Astrocyte of the cerebellum (primary cell): ENCODE measurements at regions of chr1 and their contacts with region 1.

Region 1: DNA sequence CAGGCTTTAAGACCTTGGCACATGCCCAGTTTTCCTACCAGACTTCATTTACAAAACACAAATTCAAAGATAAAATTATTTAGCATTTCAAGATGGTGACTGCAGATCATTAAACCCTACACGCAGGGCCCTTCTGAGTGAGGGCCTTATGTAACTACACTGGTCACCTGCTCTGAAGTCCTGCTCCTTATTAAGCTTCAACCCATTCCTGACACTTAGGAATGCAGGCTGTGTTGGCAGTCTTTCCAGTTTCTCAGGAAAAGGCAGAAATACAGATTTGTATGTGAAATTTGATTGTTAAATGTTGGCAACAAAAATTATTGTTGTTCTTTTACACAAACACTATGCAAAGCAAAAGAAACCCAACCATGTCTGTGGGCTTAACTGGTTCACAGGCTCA is 25.8 kb upstream of the BCAS2 start:
- DNase-seq: no peak
- H3K4me3 ChIP-seq: no peak overlapping the region
- CTCF ChIP-seq: no peak

Region 2: DNA sequence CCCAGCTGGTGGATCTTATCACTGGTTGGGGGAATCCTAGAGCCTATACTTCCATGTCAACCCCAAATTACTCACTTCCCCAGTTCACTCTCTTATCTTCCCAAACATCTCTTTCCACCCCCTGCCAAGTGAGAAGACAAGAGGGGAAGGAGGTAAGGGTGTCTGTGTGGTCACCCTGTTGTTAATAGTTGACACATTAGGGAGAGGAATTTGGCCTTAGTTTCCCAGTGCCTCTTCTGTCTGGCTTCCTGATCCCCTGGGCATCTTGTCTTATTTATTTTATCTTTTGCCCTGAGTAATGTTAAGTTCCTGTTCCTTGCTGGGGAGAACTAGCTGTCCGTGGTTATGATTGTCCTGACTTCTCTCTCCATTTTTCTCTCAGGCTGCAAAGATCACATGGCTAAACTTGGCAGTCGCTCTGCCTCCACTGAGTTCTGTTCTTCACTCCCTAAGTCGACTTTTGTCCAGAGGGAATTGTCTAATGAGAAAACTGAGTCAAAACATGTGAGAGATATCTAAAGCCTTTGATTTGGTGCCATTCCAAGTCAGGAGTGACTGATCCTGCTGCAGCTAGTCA is 296.4 kb before region 1 on chr1:
- in situ Hi-C with region 1: no loop called
- DNase-seq: peak; percentile 55
- H3K4me3 ChIP-seq: no peak overlapping the region
- CTCF ChIP-seq: no peak

Region 3: DNA sequence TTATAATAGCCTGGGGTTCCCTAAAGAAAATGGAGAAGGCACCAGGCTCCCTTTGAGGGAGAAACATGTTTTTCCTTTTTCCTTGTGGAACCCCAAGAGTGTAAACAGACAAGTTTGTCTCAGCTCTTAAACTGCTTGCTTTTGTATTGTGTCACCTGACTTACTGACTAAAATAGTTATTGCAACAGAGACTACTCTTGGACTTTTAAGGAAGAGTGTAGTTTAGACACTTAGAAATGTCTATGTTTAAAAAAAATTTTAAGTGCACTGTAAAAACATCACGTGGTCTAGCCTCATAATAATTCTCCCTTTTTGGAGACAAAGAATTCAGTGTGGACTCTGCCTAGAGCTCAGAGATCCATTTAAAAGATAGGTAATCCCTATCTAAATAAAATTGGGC is 237.3 kb before region 1 on chr1:
- in situ Hi-C with region 1: no loop called
- DNase-seq: no peak
- H3K4me3 ChIP-seq: no peak overlapping the region
- CTCF ChIP-seq: no peak

Region 4: DNA sequence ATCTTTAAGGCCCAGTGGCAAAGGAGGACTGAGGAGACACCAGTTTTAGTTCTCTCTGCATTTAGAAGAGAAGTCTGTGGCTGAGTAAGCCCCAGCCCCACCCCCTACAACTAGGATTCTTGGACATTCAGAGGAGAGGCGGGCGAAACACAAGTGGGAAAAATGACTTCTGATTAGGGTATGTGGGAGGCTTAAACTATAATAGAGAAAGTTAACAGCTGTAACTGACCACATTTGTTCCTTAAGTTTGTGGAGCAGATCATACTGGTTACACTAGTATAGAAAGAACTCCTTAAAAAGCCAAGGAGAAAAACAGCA is 85.0 kb before region 1 on chr1:
- in situ Hi-C with region 1: no loop called
- DNase-seq: no peak
- H3K4me3 ChIP-seq: no peak overlapping the region
- CTCF ChIP-seq: no peak

Region 5: GRCh38 chr1:114651893-114652292 is 44.7 kb after region 1 on chr1:
- in situ Hi-C with region 1: no loop called
- DNase-seq: no peak
- H3K4me3 ChIP-seq: no peak overlapping the region
- CTCF ChIP-seq: no peak

Region 6: GRCh38 chr1:114669562-114670082 is 62.4 kb after region 1 on chr1 and contains the start of gene DENND2C:
- in situ Hi-C with region 1: loop called (anchors 10 kb)
- DNase-seq: no peak
- H3K4me3 ChIP-seq: peak within 1 kb of the TSS; percentile 67
- CTCF ChIP-seq: no peak